ENCODE measurements at regions of chr3 and their contacts with region 1.

Region 1: DNA sequence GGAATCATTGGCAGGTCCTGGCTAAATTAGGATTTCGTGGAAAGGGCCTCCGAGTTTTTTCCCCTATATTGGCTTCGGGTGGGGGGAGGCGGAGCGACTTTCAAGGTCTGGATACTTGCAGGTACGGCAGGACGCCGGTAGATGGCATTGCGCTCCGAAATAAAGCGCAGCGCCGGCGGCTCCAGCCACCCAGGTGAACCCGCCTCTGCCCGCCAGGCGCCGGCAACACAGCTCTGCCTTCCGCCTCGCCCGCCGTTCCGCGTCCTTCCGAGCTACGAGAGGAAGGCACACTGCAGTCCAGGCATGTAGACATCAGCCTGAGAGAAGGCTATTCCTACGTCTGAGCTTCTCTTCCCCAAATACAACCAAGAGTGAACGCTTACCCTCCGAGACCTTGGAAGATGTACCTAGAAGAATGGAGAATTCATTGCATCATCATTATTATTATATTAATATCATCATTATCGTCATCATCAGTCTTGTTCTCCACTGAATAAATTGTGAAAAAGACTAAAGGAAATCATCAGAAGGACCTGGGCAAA is 514.1 kb downstream of the MECOM start:
- DNase-seq: peak; percentile 89
- ATAC-seq: peak; percentile 78

Region 2: DNA sequence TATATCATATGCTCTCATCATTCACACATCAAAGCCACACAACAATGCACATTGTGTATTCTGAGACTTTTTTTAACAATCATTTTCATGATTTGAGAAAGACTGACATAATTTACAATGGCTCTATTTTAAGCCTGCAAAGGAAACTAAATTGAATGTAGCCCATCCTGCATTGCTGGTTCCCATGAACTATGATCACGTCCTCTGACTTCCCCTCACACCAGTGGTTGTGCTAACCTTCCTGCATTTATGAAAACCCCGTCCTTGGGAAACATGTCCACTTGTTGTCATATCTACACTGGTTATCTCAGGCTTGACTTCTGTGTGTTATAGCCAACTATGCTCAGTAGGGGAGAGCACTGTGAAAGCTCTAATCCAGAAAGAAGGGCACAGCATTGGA is 32.1 kb before region 1 on chr3:
- intact Hi-C with region 1: loop called (anchors 2 kb)
- DNase-seq: no peak
- ATAC-seq: no peak

Region 3: GRCh38 chr3:169295126-169295525 is 145.7 kb after region 1 on chr3:
- intact Hi-C with region 1: loop called (anchors 5 kb)
- DNase-seq: no peak
- ATAC-seq: no peak

Region 4: DNA sequence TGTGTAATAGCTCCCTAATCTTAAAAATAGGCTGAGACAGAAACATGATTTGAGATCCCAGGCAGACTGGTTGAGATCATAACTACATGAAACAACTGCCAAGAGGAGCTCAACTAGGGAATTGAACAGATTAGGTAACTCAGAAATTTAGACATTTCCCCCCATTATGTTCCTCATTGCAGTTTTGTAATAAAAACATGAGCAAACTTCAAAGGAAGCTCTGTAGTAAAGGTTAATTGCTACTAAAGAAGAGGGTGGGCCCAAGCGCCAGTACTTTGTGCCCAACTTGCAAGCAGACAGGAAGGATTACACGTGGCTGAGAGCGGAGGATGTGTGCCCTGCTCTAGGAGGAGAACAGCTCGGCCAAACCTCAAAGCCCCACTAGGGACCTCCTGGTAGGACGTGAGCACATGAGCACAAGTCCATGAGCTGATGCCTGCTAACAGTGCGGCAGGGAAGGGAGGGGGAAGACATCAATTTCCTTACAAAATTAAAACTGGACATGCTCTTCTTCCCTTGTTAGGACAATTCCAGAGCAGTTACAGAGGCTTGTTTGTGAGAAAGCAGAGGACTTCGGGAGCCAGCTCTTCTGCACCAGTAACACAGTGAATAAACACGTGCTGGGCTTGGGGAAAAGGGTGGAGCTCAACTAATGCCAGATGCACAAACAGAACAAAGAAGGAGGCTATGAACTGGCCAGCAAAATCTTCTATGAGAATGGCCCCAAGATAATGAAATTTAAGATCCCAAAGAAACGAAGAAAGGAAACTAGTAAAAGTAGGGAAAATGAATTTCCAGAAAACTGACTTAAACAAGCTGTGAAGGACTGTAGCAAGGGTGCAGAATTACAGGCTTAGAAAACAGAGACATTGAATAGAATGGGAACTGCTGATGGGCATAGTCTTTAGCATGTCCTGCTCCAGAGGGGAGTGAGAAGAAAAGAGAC is 238.6 kb after region 1 on chr3:
- intact Hi-C with region 1: loop called (anchors 5 kb)
- DNase-seq: peak; percentile 80
- ATAC-seq: peak; percentile 90

Region 5: DNA sequence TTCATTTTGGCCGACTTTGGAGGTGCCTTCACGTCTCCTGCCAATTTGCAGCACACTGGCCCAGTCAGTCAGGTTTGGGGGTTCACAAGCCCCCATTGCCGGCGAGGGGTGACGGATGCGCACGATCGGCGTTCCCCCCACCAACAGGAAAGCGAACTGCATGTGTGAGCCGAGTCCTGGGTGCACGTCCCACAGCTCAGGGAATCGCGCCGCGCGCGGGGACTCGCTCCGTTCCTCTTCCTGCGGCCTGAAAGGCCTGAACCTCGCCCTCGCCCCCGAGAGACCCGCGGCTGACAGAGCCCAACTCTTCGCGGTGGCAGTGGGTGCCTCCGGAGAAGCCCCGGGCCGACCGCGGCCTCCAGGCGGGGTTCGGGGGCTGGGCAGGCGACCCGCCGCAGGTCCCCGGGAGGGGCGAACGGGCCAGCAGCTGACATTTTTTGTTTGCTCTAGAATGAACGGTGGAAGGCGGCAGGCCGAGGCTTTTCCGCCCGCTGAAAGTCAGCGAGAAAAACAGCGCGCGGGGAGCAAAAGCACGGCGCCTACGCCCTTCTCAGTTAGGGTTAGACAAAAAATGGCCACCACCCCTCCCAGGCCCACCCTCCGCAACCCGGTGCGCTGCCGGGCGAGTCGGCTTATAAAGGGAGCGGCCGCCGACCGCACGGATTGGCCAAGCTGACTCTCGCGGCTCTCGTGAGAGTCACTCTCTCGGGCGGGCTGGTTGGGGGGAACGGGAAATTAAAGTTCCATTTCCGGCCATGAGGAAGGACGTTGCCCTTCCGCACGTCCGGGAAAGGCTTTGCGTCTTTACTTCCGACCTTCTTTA is 615.2 kb after region 1 on chr3 and contains the start of gene TERC:
- intact Hi-C with region 1: loop called (anchors 10 kb)
- DNase-seq: peak; percentile 95
- ATAC-seq: peak; percentile 96
- total RNA-seq, gene TERC: 2.6 TPM